PC-3 (cell line): ENCODE measurements at regions of chr5 and their contacts with region 1.

Region 1: DNA sequence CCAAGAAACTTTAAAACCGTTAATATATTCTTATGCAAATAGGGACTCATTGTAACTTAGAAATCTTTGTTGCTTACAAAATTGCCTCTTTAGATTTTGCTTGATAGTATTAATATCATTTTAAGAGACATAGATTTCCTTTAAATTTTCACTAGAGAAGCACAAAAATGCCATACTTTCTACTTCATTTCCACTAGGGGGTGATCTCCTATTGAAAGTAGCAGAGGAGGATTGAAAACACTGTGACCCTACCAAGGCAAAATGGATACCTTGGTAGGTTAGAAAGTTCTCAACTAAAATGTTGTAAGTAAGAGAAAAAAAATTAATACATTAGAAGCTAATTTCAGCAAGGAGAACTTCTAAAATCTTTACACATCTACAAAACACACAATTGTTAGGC is 204.9 kb downstream of the CHSY3 start:
- DNase-seq: peak; percentile 61
- ATAC-seq: 0 out of 2 replicates have a peak, but pooled peaks have one; percentile 23
- H3K4me3 ChIP-seq: no peak overlapping the region
- H3K27ac ChIP-seq: no peak overlapping the region
- H3K4me1 ChIP-seq: peaks cover 15% of the 10 kb centered on the region
- H3K27me3 ChIP-seq: no peaks in the 10 kb centered on the region
- CTCF ChIP-seq: peak; percentile 80

Region 2: DNA sequence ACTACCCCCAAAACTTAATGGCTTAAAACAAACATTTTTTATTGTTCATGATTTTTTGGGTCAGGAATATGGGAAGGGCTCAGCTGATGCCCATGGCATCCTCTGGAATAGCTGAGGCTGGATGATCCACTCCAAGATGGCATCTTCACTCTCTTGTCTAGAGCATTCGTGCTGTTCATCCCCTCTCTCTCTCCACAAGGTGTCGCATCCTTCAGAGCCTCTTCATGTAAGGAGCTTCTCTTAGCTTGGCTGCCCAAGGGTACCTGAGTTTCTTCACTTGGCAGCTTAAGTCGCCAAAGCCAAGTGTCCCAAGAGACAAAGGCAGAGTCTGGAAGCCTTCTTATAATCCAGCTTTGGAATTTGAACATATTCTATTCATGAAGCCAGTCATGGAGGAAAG is 89.8 kb after region 1 on chr5:
- CTCF ChIA-PET with region 1: no interaction called
- POLR2A ChIA-PET with region 1: no interaction called
- intact Hi-C with region 1: no loop called
- DNase-seq: peak; percentile 56
- ATAC-seq: peak; percentile 67
- H3K4me3 ChIP-seq: no peak overlapping the region
- H3K27ac ChIP-seq: no peak overlapping the region
- H3K4me1 ChIP-seq: no peaks in the 10 kb centered on the region
- H3K27me3 ChIP-seq: no peaks in the 10 kb centered on the region
- CTCF ChIP-seq: peak; percentile 58

Region 3: DNA sequence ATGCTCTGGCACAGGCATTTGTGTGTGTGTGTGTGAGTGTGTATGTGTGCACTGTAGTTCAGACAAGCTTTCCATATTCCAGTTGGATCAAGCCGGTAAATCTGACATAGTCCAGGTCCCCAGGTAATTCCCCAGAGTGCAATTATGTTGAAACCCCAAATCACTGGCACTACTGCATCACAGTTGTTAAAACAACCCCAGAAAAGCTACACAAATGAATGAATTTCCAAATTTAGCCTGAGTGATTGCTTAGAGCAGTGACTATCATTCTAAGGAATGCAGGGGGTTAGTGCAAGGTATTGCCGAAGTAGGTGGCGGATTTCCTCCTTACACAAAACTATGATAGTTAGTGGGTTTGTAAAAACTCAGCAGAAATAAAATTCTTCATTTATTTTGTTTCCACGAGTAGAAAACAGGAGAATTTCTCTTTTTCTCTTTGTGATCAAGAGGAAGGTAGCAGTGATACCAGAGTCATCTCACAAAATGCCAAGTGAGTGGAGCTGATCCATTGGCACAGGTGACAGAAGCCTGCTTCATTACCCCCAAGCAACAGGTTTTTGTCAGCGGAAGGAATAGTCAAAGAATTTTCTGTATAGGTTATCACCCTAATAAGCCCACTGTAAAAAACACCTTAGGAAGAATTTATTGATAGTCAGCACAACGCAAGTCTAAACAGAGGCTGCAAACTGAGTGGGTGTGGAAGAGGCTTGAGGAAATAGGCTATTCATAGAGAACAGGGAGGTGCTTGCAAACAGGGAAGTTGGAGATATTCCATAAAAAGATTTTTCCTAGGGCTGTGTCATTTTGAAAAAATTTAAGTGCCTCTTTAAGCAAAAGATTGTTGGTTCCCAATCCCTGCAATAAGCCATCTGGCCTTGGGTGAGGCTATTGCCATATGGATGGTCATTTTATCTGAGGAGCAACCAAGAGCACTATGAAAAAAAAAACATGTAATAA is 180.3 kb after region 1 on chr5:
- CTCF ChIA-PET with region 1: no interaction called
- POLR2A ChIA-PET with region 1: no interaction called
- intact Hi-C with region 1: loop called (anchors 10 kb)
- DNase-seq: peak; percentile 80
- ATAC-seq: peak; percentile 94
- H3K4me3 ChIP-seq: peak overlapping the region; percentile 52
- H3K27ac ChIP-seq: peak overlapping the region; percentile 61
- H3K4me1 ChIP-seq: peaks cover 17% of the 10 kb centered on the region
- H3K27me3 ChIP-seq: no peaks in the 10 kb centered on the region
- CTCF ChIP-seq: no peak

Region 4: DNA sequence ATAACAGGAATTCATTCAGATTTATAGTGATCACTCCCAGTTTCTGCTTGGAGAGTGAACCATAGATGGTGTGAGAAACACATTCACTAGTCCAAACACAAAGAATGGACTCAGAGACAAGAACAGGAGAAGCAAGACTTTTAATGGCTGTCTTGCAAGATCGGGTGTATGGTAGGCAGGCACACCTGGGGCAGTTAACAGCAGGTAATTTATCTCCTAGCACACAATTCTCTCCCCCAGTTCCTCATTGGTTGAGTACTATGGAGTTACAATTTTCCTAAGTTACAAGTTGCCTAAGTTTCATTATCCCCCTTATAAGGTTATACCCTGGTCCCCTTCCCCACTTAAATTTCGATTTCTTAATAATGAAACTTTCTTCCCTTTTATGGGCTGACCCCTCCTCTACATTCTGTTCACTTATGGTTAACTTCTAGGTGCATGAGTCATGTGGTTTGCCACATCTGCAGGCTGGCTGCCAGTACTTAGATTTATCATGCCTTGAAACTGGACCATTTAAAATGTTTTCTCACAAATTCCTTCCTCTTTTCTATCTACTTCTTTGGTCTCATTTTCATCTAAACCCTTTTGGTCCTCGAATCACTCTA is 432.6 kb after region 1 on chr5:
- CTCF ChIA-PET with region 1: no interaction called
- POLR2A ChIA-PET with region 1: no interaction called
- intact Hi-C with region 1: loop called (anchors 2 kb)
- DNase-seq: peak; percentile 86
- ATAC-seq: peak; percentile 65
- H3K4me3 ChIP-seq: peak overlapping the region; percentile 3; the same call in 1 of the 2 replicates
- H3K27ac ChIP-seq: peak overlapping the region; percentile 88
- H3K4me1 ChIP-seq: peaks cover 46% of the 10 kb centered on the region
- H3K27me3 ChIP-seq: no peaks in the 10 kb centered on the region
- CTCF ChIP-seq: no peak

Region 5: GRCh38 chr5:130720355-130720754 is 611.2 kb after region 1 on chr5:
- CTCF ChIA-PET with region 1: no interaction called
- POLR2A ChIA-PET with region 1: no interaction called
- intact Hi-C with region 1: loop called (anchors 1 kb)
- DNase-seq: peak; percentile 85
- ATAC-seq: peak; percentile 95
- H3K4me3 ChIP-seq: no peak overlapping the region
- H3K27ac ChIP-seq: peak overlapping the region; percentile 11
- H3K4me1 ChIP-seq: 0 out of 2 replicates have a peak, but pooled peaks cover 9% of the 10 kb centered on the region
- H3K27me3 ChIP-seq: no peaks in the 10 kb centered on the region
- CTCF ChIP-seq: peak; percentile 81

Region 6: DNA sequence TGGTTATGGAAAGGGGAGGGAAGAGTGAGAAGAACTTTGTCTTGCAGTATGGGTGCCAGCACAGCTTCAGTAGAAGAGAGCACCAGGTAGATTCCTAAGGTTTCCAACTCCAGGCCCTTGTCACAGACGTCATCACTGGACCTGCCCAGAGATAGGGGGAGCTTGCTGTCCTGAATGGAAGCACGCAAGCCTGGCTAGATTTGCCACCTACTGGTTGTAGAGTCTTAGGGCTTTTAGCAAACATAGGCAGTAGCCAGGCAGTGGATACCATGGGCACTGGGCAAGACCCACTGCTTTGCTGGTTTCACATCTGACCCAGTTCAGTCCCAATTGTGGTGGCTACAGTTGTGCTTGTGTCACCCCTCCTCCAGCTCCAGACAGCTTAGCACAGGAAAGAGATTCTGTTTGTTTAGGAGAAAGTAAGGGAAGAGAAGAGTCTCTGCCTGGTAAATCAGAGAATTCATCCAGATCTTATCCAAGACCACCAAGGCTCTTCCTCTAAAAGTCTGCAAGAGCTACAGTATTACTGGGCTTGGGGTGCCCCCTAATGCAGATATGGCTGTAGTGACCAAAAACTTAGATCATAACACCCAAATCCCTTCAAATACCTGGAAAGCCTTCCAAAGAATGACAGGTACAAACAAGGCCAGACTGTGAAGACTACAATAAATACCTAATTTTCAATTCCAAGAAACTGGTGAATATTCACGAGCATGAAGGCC is 897.0 kb after region 1 on chr5:
- CTCF ChIA-PET with region 1: no interaction called
- POLR2A ChIA-PET with region 1: no interaction called
- intact Hi-C with region 1: loop called (anchors 10 kb)
- DNase-seq: no peak
- ATAC-seq: peak; percentile 45; the same call in 1 of the 2 replicates
- H3K4me3 ChIP-seq: no peak overlapping the region
- H3K27ac ChIP-seq: no peak overlapping the region
- H3K4me1 ChIP-seq: no peaks in the 10 kb centered on the region
- H3K27me3 ChIP-seq: no peaks in the 10 kb centered on the region
- CTCF ChIP-seq: peak; percentile 31